Activated T-helper 2 cell treated with anti-CD3 and anti-CD28 coated beads, Interferon-gamma antibody, Interleukin-2, Interleukin-4, amounts not matched to agents 10 μg/mL and 5 μg/mL and 100 μg/mL, durations not matched to agents 14 hours and 24 hours and 36 hours (primary cell): ENCODE measurements at regions of chr6 and their contacts with region 1.

Region 1: GRCh38 chr6:17700421-17701416 is 6.0 kb downstream of the NUP153 start:
- DNase-seq: no peak
- H3K4me3 Mint-ChIP-seq: no peak overlapping the region
- H3K27ac Mint-ChIP-seq: peak overlapping the region; percentile 28
- H3K4me1 Mint-ChIP-seq: peaks cover 30% of the 10 kb centered on the region
- H3K27me3 Mint-ChIP-seq: no peaks in the 10 kb centered on the region

Region 2: GRCh38 chr6:17640477-17640917 is 60.2 kb before region 1 on chr6:
- intact Hi-C with region 1: no loop called
- DNase-seq: no peak
- H3K4me3 Mint-ChIP-seq: no peak overlapping the region
- H3K27ac Mint-ChIP-seq: peak overlapping the region; percentile 22
- H3K4me1 Mint-ChIP-seq: peaks cover 20% of the 10 kb centered on the region
- H3K27me3 Mint-ChIP-seq: no peaks in the 10 kb centered on the region

Region 3: DNA sequence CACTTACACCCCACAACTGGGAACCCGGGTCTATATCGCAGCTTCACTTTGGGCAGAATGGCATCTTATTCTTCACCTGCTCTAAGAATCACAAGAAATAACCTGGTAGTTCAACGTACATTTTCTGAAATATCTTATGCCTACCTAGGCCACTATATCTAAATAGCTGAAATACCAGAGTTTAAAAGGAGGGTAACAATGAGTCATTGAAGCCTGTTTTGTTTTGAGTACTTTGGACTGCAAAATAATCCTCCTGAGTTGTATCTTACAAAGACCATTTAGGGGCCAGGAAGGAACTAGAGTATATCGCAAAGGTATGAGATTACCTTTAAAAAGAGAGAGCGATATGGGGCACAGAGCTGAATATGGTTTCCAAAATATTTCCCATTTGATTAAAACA is 102.7 kb after region 1 on chr6:
- intact Hi-C with region 1: loop called (anchors 5 kb)
- DNase-seq: no peak
- H3K4me3 Mint-ChIP-seq: no peak overlapping the region
- H3K27ac Mint-ChIP-seq: no peak overlapping the region
- H3K4me1 Mint-ChIP-seq: no peaks in the 10 kb centered on the region
- H3K27me3 Mint-ChIP-seq: peaks cover 20% of the 10 kb centered on the region